Transverse colon (tissue), 4 donors: ENCODE measurements at regions of chr14 and their contacts with region 1.

Region 1: DNA sequence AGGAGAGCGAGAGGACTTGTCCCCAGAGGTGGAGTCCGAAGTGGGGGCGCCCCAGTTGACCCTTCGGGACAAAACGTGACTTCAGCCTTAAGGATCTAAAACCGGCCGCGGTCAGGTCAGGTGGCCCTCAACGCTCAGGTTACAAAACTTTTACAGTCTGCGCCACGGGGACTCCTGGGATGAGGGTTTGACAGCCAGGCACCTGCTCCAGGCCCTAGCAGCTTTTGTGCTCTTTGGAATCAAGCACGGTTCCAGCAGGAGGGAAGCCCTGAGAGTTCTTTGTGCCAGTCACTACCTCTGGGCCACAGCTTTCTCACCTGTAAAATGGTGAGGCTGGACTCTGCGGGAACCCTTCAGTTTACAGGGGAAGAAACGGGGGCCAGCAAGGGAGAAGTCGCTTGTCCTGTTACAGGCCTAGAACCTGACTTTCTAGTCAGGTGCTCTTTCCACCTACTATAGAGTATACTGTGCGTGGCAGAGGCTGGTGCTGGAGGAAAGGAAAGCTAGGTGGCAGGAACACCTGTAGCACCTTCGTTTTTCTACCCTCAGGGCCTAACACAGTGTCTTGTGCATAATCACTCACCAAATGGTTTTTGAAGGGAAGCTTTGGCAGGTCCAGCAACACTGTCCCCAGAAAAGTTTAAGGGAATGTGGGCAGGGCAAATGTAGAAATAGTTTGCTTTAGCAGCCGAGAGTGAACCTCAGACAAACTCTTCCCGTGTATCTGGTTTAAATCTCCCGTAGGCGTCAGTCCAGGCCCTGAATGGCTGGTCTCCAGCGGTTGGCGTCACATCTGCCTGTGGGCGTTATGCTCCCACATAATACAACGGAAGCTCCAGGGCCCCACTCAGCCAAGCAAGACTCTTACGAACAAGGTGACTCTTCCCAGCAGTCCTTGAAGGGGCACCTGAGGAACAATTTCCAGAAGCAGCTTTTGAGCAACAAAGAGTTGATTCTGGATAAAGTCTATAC is 656 bp downstream of the ZC2HC1C start:
- DNase-seq: peak; percentile 47
- H3K4me3 ChIP-seq: peak overlapping the region in 3 of 4 donors; percentile 39 to 66 (median 40)
- H3K27ac ChIP-seq: peak overlapping the region; percentile 90 to 95 (median 94)
- H3K4me1 ChIP-seq: peaks cover 6 to 34% (median 21%) of the 10 kb centered on the region in 4 donors
- H3K27me3 ChIP-seq: no peaks in the 10 kb centered on the region
- CTCF ChIP-seq: no peak
- EP300 ChIP-seq: no peak
- POLR2A ChIP-seq: no peak

Region 2: DNA sequence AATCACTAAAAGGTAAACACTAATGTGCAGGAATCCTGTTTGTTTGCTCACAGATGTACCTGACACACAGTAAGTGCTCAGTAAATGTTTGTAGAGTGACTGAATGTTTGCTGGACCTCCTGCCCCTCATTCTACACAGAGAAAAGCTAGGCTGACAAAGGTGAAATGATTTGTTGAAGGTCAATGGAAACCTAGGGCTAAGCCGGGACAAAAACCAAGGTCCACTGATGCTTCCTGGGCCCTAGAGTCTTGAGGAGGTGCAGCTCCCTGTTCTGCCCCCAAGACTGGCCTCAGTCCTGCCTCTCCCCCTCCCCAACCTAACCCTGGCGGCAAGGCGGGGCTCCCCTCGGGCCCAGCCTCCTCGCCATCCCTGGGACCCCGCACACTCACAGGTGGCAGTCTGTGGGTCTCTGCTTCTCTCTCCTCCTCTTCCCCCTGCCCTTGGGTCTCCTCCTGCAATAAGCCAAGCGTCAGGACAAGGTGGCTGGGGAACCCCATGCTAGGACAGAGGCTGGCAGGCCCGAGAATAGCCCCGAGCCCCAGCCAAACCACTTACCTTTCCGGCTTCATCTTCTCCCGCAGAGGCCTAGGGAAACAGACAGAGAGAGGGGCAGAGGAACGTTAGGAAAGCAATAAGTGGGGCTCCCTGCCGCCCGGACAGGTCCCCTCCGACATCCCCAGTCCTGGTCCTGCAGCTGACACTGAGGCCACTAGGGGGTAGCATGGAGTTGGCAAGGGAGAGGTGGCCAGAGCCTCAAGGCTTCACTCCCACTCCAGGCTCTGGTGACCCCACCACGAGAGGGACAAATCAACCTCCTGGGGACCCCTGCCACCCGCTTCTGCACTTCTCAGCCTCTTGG is 124.0 kb before region 1 on chr14:
- in situ Hi-C with region 1: loop called in 2 of 4 experiments (anchors 10 to 25 kb)
- intact Hi-C with region 1: no loop called
- DNase-seq: peak; percentile 82
- H3K4me3 ChIP-seq: no peak overlapping the region
- H3K27ac ChIP-seq: peak overlapping the region in 2 of 4 donors; percentile 3 to 24
- H3K4me1 ChIP-seq: peaks cover 6 to 30% (median 22%) of the 10 kb centered on the region in 4 donors
- H3K27me3 ChIP-seq: no peaks in the 10 kb centered on the region
- CTCF ChIP-seq: peak; percentile 89 to 94 (median 91)
- EP300 ChIP-seq: no peak
- POLR2A ChIP-seq: no peak